Natural killer cell (primary cell): ENCODE measurements at regions of chr2 and their contacts with region 1.

Region 1: DNA sequence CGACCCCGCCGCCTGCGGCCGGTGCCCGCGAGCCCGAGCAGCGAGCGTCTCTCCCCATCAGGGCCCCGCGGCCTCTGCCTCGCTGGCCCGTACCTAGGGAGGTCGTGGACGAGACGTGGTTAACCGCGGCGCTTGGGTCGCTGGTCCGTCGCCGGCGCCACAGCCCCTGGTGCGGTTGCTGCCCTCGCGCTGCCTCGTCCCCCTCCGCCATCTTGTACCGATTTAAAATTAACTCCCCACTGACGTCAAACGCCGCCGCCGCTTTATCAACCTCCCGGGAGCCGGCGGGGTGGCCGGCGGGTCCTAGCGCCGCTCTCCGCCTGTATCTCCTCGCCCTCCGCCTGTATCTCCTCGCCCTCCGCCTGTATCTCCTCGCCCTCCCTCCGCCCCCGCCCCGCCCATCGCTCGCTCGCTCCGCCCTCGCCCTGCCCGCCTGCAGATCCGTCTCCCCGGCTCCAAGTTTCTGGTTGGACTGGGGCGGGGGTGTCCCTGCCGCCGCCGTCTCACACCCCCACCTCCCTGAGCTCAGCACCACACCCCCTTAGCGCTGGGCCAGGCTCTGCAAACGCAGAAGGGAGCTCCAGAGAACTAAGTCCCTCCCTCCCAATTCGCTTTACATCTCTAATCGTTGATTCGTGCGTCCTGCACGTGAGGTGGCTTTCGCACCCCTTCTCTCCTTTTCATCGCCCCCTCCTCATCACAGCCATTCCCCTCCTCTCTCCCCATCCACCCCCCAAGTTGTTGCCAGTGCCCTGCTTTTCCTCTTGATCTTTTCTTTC is at the start of gene ATL2:
- DNase-seq: peak; percentile 89 to 95
- ATAC-seq: peak; percentile 81 to 93 (median 84)
- H3K4me3 ChIP-seq: peak within 1 kb of the TSS; percentile 97
- H3K4me3 Mint-ChIP-seq: peak within 1 kb of the TSS; percentile 99
- H3K27ac ChIP-seq: peak within 1 kb of the TSS; percentile 91
- H3K27ac Mint-ChIP-seq: peak within 1 kb of the TSS; percentile 90 to 95
- H3K4me1 ChIP-seq: peaks cover 14% of the 10 kb centered on the region
- H3K4me1 Mint-ChIP-seq: peaks cover 39 to 47% of the 10 kb centered on the region in 2 donors
- H3K27me3 ChIP-seq: no peaks in the 10 kb centered on the region
- H3K27me3 Mint-ChIP-seq: no peaks in the 10 kb centered on the region
- CTCF ChIP-seq: no peak
- total RNA-seq, gene ATL2: 48.3 to 51.8 (median 51.5) TPM

Region 2: DNA sequence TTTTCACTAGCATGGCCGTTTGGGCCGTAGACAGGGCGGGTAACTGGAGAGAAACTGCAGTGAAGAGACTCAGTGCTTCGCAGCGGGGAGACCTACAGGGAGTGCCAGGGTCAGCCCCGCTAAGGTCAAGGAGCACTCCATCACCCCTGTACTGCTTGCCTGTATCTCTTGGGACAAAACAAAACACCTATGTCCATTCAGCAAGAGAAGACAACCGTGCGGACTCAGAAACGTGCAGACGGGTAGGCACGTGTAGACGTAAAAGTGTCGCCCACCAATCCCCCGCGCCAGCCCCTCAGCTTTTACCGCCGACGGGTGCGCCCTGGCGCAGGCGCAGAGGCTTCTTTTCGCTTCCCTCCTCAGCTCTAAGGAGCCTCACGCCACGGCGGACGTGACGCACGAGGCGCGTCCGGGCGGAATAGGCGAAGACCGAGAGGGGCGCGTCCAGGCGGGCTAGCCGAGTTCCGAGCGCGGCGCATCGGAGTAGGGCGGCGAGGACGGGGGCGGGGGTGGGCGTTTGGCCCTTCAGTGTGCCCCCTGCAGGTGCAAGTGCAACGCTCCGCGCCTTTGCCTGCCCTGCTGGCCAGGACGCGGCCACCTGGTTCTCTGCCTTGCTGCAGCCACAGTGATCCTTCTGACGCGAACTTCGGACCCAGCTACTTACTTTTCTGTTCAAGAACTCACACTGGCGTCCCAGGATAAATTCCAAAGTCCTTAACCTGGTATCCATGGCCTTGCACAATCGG is 746.9 kb after region 1 on chr2:
- intact Hi-C with region 1: loop called (anchors 10 kb)
- DNase-seq: peak; percentile 90 to 98
- ATAC-seq: peak; percentile 75 to 93 (median 80)
- H3K4me3 ChIP-seq: peak overlapping the region; percentile 65
- H3K4me3 Mint-ChIP-seq: peak overlapping the region; percentile 90
- H3K27ac ChIP-seq: peak overlapping the region; percentile 77
- H3K27ac Mint-ChIP-seq: peak overlapping the region; percentile 89 to 96
- H3K4me1 ChIP-seq: peaks cover 38% of the 10 kb centered on the region
- H3K4me1 Mint-ChIP-seq: peaks cover 45 to 51% of the 10 kb centered on the region in 2 donors
- H3K27me3 ChIP-seq: no peaks in the 10 kb centered on the region
- H3K27me3 Mint-ChIP-seq: no peaks in the 10 kb centered on the region
- CTCF ChIP-seq: peak; percentile 62